ENCODE measurements at regions of chr3 and their contacts with region 1.

Region 1: DNA sequence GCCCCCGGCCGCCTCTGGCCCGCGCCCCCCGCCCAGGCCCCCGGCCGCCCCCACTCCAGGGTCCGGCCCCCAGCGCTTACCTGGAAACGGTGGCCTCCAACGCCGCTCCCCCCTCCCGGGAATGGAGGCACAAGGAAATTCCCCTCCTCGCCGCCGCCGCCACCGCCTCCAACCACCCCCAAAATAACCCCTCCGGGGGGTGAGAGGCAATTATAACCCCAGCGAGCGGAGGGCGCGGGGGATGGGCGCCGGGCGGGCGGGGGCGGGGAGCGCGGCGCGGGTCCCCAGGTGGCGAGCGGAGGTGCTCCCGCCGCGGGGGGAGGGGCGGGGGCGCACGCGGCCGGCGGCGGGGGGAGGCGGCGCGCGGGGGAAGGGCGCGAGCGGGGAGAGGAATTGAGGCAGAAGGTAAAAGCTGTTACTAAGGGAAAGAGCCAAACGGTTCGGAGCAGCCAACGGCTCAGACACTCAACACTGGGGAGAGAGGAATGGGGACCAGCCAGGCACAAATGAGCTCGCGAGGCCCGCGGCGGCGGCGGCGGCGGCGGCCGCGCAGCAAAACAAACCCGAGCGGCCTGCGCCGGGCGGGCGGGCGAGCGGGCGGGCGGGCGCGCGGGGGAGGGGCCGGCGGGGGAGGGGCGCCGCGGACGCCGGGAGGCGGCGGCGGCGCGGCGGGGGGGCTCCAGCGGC is at the start of gene TBL1XR1:
- DNase-seq: peak; percentile 86
- H3K4me3 Mint-ChIP-seq: peak within 1 kb of the TSS; percentile 98
- H3K27ac Mint-ChIP-seq: peak within 1 kb of the TSS; percentile 99
- H3K4me1 Mint-ChIP-seq: peaks cover 66% of the 10 kb centered on the region
- H3K27me3 Mint-ChIP-seq: no peaks in the 10 kb centered on the region
- total RNA-seq, gene TBL1XR1: 184 and 190 TPM in 2 replicates

Region 2: DNA sequence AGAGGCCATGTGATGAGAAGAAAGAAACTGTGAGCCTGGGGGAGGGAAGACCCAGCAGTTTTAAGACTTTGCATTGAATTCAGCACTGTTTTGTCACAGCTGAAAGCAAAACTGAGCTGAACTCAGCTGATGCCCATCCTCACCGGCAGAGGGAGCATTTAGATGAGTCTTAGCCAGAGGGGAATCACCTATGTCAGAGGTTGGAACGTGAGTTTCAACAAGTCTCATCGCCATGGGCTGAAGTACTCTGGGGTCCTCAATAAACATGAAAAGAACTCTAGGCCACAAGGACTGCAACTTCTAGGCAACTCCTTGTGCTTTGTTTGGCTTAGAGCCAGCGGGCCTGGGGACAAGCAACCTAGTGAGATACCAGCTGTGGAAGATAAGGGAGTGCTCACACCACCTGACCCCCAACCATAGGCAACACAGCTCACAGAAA is 324.4 kb before region 1 on chr3:
- intact Hi-C with region 1: loop called (anchors 5 kb)
- DNase-seq: peak; percentile 30
- H3K4me3 Mint-ChIP-seq: no peak overlapping the region
- H3K27ac Mint-ChIP-seq: no peak overlapping the region
- H3K4me1 Mint-ChIP-seq: peaks cover 8% of the 10 kb centered on the region
- H3K27me3 Mint-ChIP-seq: no peaks in the 10 kb centered on the region

Region 3: GRCh38 chr3:177134816-177135210 is 62.4 kb before region 1 on chr3:
- intact Hi-C with region 1: no loop called
- DNase-seq: no peak
- H3K4me3 Mint-ChIP-seq: no peak overlapping the region
- H3K27ac Mint-ChIP-seq: no peak overlapping the region
- H3K4me1 Mint-ChIP-seq: peaks cover 57% of the 10 kb centered on the region
- H3K27me3 Mint-ChIP-seq: no peaks in the 10 kb centered on the region

Region 4: DNA sequence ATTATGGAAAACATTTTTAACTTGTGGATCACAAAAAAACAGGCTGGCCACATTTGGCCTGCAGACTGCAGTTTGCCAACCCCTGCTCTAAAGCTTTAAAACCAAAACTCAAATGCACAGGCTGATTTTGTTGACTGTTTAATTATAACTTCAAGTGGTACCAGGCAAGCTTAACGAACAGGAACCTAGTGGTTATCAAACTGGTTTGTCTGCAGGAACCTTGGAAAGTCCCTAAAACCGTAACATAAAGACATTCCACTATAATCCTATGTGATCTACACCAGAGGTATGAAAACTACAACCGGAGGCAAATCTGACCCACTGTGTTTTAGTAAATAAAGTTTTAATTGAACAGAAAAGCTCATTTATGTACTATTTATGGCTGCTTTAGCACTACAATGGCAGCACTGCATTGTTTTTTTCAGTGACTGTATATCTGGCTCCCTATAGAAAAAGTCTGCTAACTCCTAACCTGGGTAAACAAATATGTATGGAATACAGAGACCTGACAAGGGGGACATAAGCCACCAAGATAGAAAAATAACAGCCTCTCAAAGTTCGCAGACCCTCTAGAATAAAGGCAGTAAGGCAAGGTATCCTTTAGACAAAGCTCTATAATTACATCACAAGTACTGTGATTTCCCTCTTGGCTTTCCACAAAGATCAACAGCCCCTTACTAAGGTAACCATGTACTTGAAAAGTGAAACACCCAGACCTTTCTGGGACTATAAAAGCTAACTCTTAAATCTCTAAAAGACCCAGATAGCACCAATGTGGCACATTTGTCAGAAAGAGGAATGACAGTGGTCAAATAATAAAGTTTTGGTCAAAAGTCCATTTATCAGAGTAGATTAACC is 52.0 kb before region 1 on chr3:
- intact Hi-C with region 1: loop called (anchors 1 kb)
- DNase-seq: peak; percentile 35
- H3K4me3 Mint-ChIP-seq: peak overlapping the region; percentile 61
- H3K27ac Mint-ChIP-seq: peak overlapping the region; percentile 93
- H3K4me1 Mint-ChIP-seq: peaks cover 69% of the 10 kb centered on the region
- H3K27me3 Mint-ChIP-seq: no peaks in the 10 kb centered on the region

Region 5: GRCh38 chr3:177229791-177230190 is 32.6 kb after region 1 on chr3:
- intact Hi-C with region 1: no loop called
- DNase-seq: no peak
- H3K4me3 Mint-ChIP-seq: no peak overlapping the region
- H3K27ac Mint-ChIP-seq: no peak overlapping the region
- H3K4me1 Mint-ChIP-seq: peaks cover 1% of the 10 kb centered on the region
- H3K27me3 Mint-ChIP-seq: no peaks in the 10 kb centered on the region

Region 6: DNA sequence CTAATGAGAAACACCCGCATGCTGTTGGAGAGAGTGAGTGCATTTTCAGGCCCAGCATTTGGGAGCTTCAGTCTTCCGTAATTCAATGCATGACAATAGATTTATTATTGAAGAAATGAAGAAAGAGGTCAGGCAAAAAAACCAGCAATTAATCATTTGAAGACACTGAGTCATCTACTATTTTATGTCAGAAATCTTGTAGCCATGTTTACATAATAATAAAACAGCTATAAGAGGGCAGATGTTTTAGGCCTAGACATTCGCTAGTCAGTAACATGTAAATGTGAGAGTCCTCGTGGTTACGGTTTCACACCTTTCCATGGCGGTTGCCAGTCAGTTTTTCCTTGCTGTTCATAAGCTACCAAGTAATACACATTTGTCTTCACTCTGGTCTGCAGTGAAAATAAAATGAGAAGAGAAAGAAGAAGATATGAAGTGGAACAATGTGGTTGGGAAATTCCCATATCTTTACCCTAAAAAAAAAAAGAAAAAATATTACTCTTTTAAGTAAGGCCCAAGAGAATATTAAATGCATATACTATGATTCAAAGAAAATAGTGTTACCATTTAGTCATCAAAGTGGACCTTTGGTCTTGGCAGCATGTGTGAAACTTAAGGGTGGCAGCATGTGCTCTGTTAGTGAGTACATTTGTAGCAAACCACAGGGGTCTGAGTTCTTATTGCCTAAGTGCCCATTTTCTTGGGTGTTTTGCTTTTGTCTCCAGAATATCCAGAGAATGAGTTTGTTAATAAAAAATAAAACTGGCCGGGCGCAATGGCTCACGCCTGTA is 140.6 kb after region 1 on chr3:
- intact Hi-C with region 1: loop called (anchors 1 kb)
- DNase-seq: peak; percentile 66
- H3K4me3 Mint-ChIP-seq: peak overlapping the region; percentile 51
- H3K27ac Mint-ChIP-seq: peak overlapping the region; percentile 95
- H3K4me1 Mint-ChIP-seq: peaks cover 65% of the 10 kb centered on the region
- H3K27me3 Mint-ChIP-seq: peaks cover 8% of the 10 kb centered on the region

Region 7: DNA sequence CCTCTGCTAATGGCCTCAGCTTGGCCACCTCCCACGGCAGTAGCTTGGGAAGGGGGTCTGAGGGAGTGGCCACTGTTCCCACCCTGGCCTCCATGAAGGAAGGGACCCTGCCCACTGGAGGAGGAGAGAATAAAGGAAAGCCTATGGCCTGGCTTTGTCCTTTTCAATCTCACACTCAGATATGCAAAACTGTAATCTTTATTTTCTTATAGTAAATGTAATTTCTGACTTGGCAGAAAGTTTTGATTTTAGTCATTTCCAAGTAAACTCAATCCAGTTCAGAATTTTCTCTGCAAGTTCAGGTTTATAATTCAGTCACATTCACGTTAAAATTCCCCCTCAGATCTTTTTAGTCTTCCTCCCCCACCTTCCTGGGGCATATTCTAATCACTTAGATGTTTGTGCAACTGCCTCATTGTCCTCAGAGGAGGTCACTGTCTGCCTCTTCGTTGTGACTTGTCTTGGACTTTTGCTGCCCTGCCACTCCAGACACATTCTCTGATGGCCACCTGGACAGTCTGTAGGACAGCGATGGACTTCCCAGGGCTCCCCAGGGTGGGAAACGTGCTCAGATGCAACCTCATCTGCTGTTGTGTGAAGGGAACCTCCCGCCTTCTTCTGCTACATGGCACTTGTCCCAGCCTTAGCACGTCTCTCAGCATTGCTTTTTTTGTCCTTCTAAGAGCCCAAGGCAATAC is 222.9 kb after region 1 on chr3:
- intact Hi-C with region 1: loop called (anchors 1 kb)
- DNase-seq: no peak
- H3K4me3 Mint-ChIP-seq: peak overlapping the region; percentile 19
- H3K27ac Mint-ChIP-seq: peak overlapping the region; percentile 53
- H3K4me1 Mint-ChIP-seq: peaks cover 26% of the 10 kb centered on the region
- H3K27me3 Mint-ChIP-seq: peaks cover 1% of the 10 kb centered on the region

Region 8: GRCh38 chr3:177665122-177665808 is 468.1 kb after region 1 on chr3:
- intact Hi-C with region 1: loop called (anchors 5 kb)
- DNase-seq: no peak
- H3K4me3 Mint-ChIP-seq: no peak overlapping the region
- H3K27ac Mint-ChIP-seq: no peak overlapping the region
- H3K4me1 Mint-ChIP-seq: no peaks in the 10 kb centered on the region
- H3K27me3 Mint-ChIP-seq: peaks cover 6% of the 10 kb centered on the region

Region 9: DNA sequence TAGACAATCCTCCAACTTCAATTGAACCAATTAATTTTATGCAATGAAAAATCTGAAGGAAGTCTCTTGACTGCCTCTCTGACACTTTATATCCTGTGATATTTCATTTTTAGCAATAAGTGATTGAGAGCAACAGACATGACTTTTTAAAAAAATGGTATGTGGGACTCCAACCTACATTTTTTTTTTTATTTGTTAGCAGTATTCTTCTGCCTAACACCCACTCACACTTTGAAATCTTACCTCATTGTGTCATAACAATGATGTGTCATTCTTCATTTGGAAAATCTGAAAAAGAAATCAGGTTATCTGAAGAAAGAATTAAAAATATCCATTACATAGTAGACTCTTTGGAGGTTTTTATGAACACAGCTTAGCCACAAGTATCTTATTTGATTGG is 797.8 kb after region 1 on chr3:
- intact Hi-C with region 1: loop called (anchors 1 kb)
- DNase-seq: no peak
- H3K4me3 Mint-ChIP-seq: no peak overlapping the region
- H3K27ac Mint-ChIP-seq: peak overlapping the region; percentile 75
- H3K4me1 Mint-ChIP-seq: peaks cover 21% of the 10 kb centered on the region
- H3K27me3 Mint-ChIP-seq: no peaks in the 10 kb centered on the region

Region 10: GRCh38 chr3:178072391-178073305 is 875.5 kb after region 1 on chr3:
- intact Hi-C with region 1: no loop called
- DNase-seq: no peak
- H3K4me3 Mint-ChIP-seq: no peak overlapping the region
- H3K27ac Mint-ChIP-seq: no peak overlapping the region
- H3K4me1 Mint-ChIP-seq: peaks cover 5% of the 10 kb centered on the region
- H3K27me3 Mint-ChIP-seq: no peaks in the 10 kb centered on the region

Measured in activated T-helper 1 cell treated with anti-CD3 and anti-CD28 coated beads, Interleukin-12 subunit alpha, Interleukin-12 subunit beta, Interleukin-2, Interleukin-4 antibody, amounts not matched to agents 30 ng/mL and 10 ng/mL and 1 ng/mL, durations not matched to agents 14 hours and 24 hours and 36 hours (primary cell).